ENCODE measurements at regions of chr10 and their contacts with region 1.

Region 1: GRCh38 chr10:104406715-104407650 is 53.4 kb downstream of the CFAP58 start:
- DNase-seq: no peak
- ATAC-seq: peak; percentile 46; the same call in 2 of the 3 replicates
- H3K4me3 ChIP-seq: no peak overlapping the region
- H3K27ac ChIP-seq: no peak overlapping the region
- H3K4me1 ChIP-seq: no peaks in the 10 kb centered on the region
- H3K27me3 ChIP-seq: no peaks in the 10 kb centered on the region; a peak in 1 of 4 replicates
- CTCF ChIP-seq: peak; percentile 27 to 53 (median 41); a peak in 5 of 6 replicates
- EP300 ChIP-seq: no peak
- POLR2A ChIP-seq: no peak
- RAD21 ChIP-seq: peak; percentile 72

Region 2: GRCh38 chr10:104614245-104614831 is 207.4 kb after region 1 on chr10:
- CTCF ChIA-PET with region 1: interaction called, 12 read pairs
- POLR2A ChIA-PET with region 1: no interaction called
- RAD21 ChIA-PET with region 1: no interaction called
- SMC1A ChIA-PET with region 1: no interaction called
- in situ Hi-C with region 1: no loop called
- intact Hi-C with region 1: loop called (anchors 2 kb)
- DNase-seq: no peak
- ATAC-seq: peak; percentile 80
- H3K4me3 ChIP-seq: no peak overlapping the region
- H3K27ac ChIP-seq: no peak overlapping the region
- H3K4me1 ChIP-seq: no peaks in the 10 kb centered on the region
- H3K27me3 ChIP-seq: no peaks in the 10 kb centered on the region
- CTCF ChIP-seq: peak; percentile 38 to 56 (median 51)
- EP300 ChIP-seq: no peak
- POLR2A ChIP-seq: no peak
- RAD21 ChIP-seq: peak; percentile 51

Measured in GM12878 (cell line).